Mucosa of descending colon (tissue), 3 donors: ENCODE measurements at regions of chr15 and their contacts with region 1.

Region 1: GRCh38 chr15:63093486-63094205 is 28.0 kb upstream of the LACTB start:
- DNase-seq: peak; percentile 68 to 96 (median 85)
- ATAC-seq: peak; percentile 95
- H3K4me3 ChIP-seq: no peak overlapping the region
- H3K4me1 ChIP-seq: peaks cover 8% of the 10 kb centered on the region
- CTCF ChIP-seq: peak; percentile 64

Region 2: DNA sequence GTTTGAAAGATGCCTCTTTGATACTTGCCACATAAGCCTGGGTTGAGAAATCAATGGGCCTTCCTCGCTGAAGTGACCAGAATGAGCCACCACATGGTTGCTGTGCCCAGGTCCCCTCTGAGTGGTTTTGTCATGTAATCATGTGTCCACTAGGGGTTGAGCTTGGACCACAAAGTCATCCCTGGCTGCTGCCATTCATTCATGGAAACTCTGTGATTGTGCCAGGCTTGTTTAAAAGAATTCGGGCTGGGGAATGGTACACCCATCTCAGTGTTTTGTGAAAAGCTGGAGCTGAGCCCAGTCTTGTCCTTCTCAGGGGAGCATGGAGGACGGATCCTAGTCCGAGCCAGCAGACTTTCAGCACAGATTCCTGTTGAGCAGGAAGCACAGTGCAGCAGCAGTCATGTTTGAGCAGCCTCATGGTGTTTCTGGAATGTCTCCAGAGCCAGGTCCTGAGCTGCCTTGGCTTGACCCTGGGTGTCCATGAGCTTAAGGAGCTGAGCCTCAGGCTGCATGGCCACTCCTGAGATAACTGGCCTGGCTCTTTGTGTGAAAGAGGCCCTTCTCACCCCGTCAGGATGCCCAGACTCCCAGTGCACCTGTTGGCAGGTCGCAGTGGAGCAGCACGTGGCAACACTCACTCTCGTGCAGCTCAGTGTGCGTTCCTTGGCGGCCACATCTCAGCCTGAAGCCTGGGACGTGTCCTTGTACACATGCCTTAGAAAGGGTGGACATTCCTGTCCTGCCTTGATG is 311.4 kb before region 1 on chr15:
- intact Hi-C with region 1: loop called in 1 of 2 experiments (anchors 5 kb)
- DNase-seq: peak in 1 of 3 donors; percentile 67
- ATAC-seq: peak; percentile 96
- H3K4me3 ChIP-seq: no peak overlapping the region
- H3K4me1 ChIP-seq: no peaks in the 10 kb centered on the region
- CTCF ChIP-seq: peak; percentile 38

Region 3: GRCh38 chr15:63038926-63039673 is 54.5 kb before region 1 on chr15:
- intact Hi-C with region 1: no loop called
- DNase-seq: no peak
- ATAC-seq: no peak
- H3K4me3 ChIP-seq: no peak overlapping the region
- H3K4me1 ChIP-seq: peaks cover 14% of the 10 kb centered on the region
- CTCF ChIP-seq: no peak